ENCODE measurements at regions of chr3 and their contacts with region 1.

Region 1: GRCh38 chr3:66276705-66277274 is 56.0 kb downstream of the SLC25A26 start:
- DNase-seq: peak; percentile 85
- ATAC-seq: peak; percentile 71
- H3K4me3 ChIP-seq: no peak overlapping the region
- H3K27ac ChIP-seq: no peak overlapping the region
- H3K4me1 ChIP-seq: peaks cover 4% of the 10 kb centered on the region
- H3K27me3 ChIP-seq: no peaks in the 10 kb centered on the region
- CTCF ChIP-seq: peak; percentile 82
- POLR2A ChIP-seq: no peak
- RAD21 ChIP-seq: peak; percentile 87

Region 2: GRCh38 chr3:66224220-66224619 is 52.6 kb before region 1 on chr3:
- CTCF ChIA-PET with region 1: no interaction called
- POLR2A ChIA-PET with region 1: no interaction called
- dilution Hi-C with region 1: no loop called
- in situ Hi-C with region 1: no loop called
- intact Hi-C with region 1: no loop called
- DNase-seq: no peak
- ATAC-seq: no peak
- H3K4me3 ChIP-seq: no peak overlapping the region
- H3K27ac ChIP-seq: no peak overlapping the region
- H3K4me1 ChIP-seq: no peaks in the 10 kb centered on the region
- H3K27me3 ChIP-seq: no peaks in the 10 kb centered on the region
- CTCF ChIP-seq: no peak
- POLR2A ChIP-seq: no peak
- RAD21 ChIP-seq: no peak

Region 3: DNA sequence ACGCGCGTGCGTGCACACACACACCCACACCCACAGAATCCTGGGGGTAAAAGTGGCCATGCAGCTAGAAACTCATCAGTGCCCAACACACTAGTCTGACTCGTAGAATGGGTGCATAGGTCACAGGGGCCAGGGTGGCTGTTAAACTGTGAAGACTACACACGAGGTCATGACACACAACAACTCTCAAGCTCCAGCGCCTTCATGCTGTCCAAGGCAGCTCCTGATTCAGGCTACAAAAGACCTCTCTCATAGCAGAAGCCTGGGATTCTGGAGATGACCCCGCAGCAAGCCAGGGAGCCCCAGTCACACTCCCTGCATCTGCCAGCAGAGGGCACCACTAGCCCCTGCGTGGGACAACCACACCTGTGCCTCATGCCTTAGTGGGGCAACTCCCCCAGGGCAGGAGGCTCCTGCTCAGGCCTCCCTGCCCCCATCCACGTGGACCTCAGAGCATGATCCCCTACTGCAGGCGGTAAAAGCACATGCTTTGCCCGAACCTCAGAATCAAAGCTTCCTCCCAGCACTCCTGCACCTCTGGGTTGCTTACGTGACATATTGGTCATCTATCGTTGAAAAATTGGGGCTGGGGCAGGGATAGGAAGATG is 130.9 kb after region 1 on chr3:
- CTCF ChIA-PET with region 1: interaction called, 3 read pairs
- POLR2A ChIA-PET with region 1: no interaction called
- dilution Hi-C with region 1: no loop called
- in situ Hi-C with region 1: loop called (anchors 10 kb)
- intact Hi-C with region 1: loop called (anchors 2 kb)
- DNase-seq: peak; percentile 55
- ATAC-seq: peak; percentile 50; the same call in 1 of the 2 replicates
- H3K4me3 ChIP-seq: no peak overlapping the region
- H3K27ac ChIP-seq: no peak overlapping the region
- H3K4me1 ChIP-seq: peaks cover 25% of the 10 kb centered on the region
- H3K27me3 ChIP-seq: no peaks in the 10 kb centered on the region
- CTCF ChIP-seq: peak; percentile 80
- POLR2A ChIP-seq: no peak
- RAD21 ChIP-seq: peak; percentile 91

Region 4: DNA sequence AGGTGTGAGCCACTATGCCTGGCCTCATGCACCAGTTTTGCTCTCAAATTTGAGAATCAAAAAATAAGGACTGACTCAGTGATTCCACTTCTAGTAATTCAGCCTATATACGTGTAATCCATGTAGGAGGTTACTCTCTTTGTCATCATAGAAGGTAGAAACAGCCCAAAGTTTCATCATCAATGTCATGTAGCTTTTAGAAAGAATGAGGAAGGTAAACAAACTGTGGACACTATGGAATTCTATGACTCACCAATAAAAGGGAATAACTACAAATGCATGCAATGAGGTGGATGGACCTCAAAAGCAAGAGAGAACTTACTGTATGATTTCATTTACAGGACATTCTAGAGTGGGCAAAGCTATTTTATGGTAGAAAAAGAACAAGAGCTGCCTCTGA is 317.2 kb after region 1 on chr3:
- CTCF ChIA-PET with region 1: no interaction called
- POLR2A ChIA-PET with region 1: no interaction called
- dilution Hi-C with region 1: no loop called
- in situ Hi-C with region 1: no loop called
- intact Hi-C with region 1: loop called (anchors 10 kb)
- DNase-seq: peak; percentile 99
- ATAC-seq: peak; percentile 68
- H3K4me3 ChIP-seq: no peak overlapping the region
- H3K27ac ChIP-seq: peak overlapping the region; percentile 57
- H3K4me1 ChIP-seq: peaks cover 12% of the 10 kb centered on the region
- H3K27me3 ChIP-seq: no peaks in the 10 kb centered on the region
- CTCF ChIP-seq: no peak
- POLR2A ChIP-seq: no peak
- RAD21 ChIP-seq: peak; percentile 1; the same call in 1 of the 2 replicates

Region 5: GRCh38 chr3:66822186-66823008 is 545.6 kb after region 1 on chr3:
- CTCF ChIA-PET with region 1: interaction called, 11 read pairs
- POLR2A ChIA-PET with region 1: no interaction called
- dilution Hi-C with region 1: no loop called
- in situ Hi-C with region 1: loop called (anchors 5 kb)
- intact Hi-C with region 1: no loop called
- DNase-seq: peak; percentile 67
- ATAC-seq: peak; percentile 72; the same call in 1 of the 2 replicates
- H3K4me3 ChIP-seq: no peak overlapping the region
- H3K27ac ChIP-seq: no peak overlapping the region
- H3K4me1 ChIP-seq: no peaks in the 10 kb centered on the region
- H3K27me3 ChIP-seq: peaks cover 11% of the 10 kb centered on the region
- CTCF ChIP-seq: peak; percentile 70
- POLR2A ChIP-seq: no peak
- RAD21 ChIP-seq: peak; percentile 73

Measured in IMR-90 (cell line).